ENCODE measurements at regions of chr4 and their contacts with region 1.

Region 1: GRCh38 chr4:184417802-184418511 is 56.4 kb downstream of the IRF2 start:
- DNase-seq: peak; percentile 22
- ATAC-seq: peak; percentile 73
- H3K4me3 Mint-ChIP-seq: no peak overlapping the region
- H3K27ac Mint-ChIP-seq: peak overlapping the region; percentile 64
- H3K4me1 Mint-ChIP-seq: peaks cover 90% of the 10 kb centered on the region
- H3K27me3 Mint-ChIP-seq: no peaks in the 10 kb centered on the region

Region 2: GRCh38 chr4:184287697-184288255 is 130.2 kb before region 1 on chr4:
- CTCF ChIA-PET with region 1: interaction called, 5 read pairs
- POLR2A ChIA-PET with region 1: interaction called, 4 read pairs
- intact Hi-C with region 1: loop called (anchors 1 kb)
- DNase-seq: no peak
- ATAC-seq: no peak
- H3K4me3 Mint-ChIP-seq: no peak overlapping the region
- H3K27ac Mint-ChIP-seq: peak overlapping the region; percentile 40
- H3K4me1 Mint-ChIP-seq: peaks cover 56% of the 10 kb centered on the region
- H3K27me3 Mint-ChIP-seq: peaks cover 4% of the 10 kb centered on the region

Region 3: GRCh38 chr4:184370711-184371389 is 47.1 kb before region 1 on chr4:
- CTCF ChIA-PET with region 1: no interaction called
- POLR2A ChIA-PET with region 1: no interaction called
- intact Hi-C with region 1: no loop called
- DNase-seq: no peak
- ATAC-seq: no peak
- H3K4me3 Mint-ChIP-seq: no peak overlapping the region
- H3K27ac Mint-ChIP-seq: no peak overlapping the region
- H3K4me1 Mint-ChIP-seq: peaks cover 13% of the 10 kb centered on the region
- H3K27me3 Mint-ChIP-seq: no peaks in the 10 kb centered on the region

Region 4: GRCh38 chr4:184384056-184384809 is 33.7 kb before region 1 on chr4:
- CTCF ChIA-PET with region 1: no interaction called
- POLR2A ChIA-PET with region 1: no interaction called
- intact Hi-C with region 1: loop called in 1 of 2 experiments (anchors 5 kb)
- DNase-seq: no peak
- ATAC-seq: peak; percentile 24
- H3K4me3 Mint-ChIP-seq: no peak overlapping the region
- H3K27ac Mint-ChIP-seq: peak overlapping the region; percentile 9
- H3K4me1 Mint-ChIP-seq: peaks cover 64% of the 10 kb centered on the region
- H3K27me3 Mint-ChIP-seq: no peaks in the 10 kb centered on the region

Region 5: DNA sequence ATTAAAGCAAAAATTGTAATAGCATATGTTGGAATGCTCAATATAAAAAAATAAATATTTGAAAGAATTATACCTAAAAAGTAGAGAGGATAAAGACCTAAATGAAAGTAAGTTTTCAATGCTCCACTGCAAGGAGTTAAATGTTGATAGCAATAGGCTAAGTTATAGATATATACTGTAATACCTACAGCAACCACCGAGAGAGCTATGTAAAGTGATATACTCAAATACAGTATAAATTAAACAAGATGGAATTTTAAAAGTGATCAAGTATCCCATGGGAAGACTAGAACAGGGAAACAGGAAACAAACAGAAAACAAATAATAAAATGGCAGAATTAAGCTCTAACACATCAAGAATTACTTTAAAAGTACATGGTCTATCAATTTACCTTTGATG is 157.3 kb after region 1 on chr4:
- CTCF ChIA-PET with region 1: interaction called, 3 read pairs
- POLR2A ChIA-PET with region 1: no interaction called
- intact Hi-C with region 1: loop called in 1 of 2 experiments (anchors 1 kb)
- DNase-seq: no peak
- ATAC-seq: peak; percentile 67
- H3K4me3 Mint-ChIP-seq: no peak overlapping the region
- H3K27ac Mint-ChIP-seq: peak overlapping the region; percentile 47
- H3K4me1 Mint-ChIP-seq: peaks cover 22% of the 10 kb centered on the region
- H3K27me3 Mint-ChIP-seq: no peaks in the 10 kb centered on the region

Region 6: GRCh38 chr4:185318679-185319078 is 900.7 kb after region 1 on chr4:
- CTCF ChIA-PET with region 1: no interaction called
- POLR2A ChIA-PET with region 1: no interaction called
- intact Hi-C with region 1: no loop called
- DNase-seq: no peak
- ATAC-seq: no peak
- H3K4me3 Mint-ChIP-seq: no peak overlapping the region
- H3K27ac Mint-ChIP-seq: no peak overlapping the region
- H3K4me1 Mint-ChIP-seq: peaks cover 9% of the 10 kb centered on the region
- H3K27me3 Mint-ChIP-seq: no peaks in the 10 kb centered on the region

Measured in activated CD4-positive, alpha-beta T cell treated with anti-CD3 and anti-CD28 coated beads for 36 hours (primary cell).